Dorsolateral prefrontal cortex (tissue), 120 donors: ENCODE measurements at regions of chr1 and their contacts with region 1.

Region 1: DNA sequence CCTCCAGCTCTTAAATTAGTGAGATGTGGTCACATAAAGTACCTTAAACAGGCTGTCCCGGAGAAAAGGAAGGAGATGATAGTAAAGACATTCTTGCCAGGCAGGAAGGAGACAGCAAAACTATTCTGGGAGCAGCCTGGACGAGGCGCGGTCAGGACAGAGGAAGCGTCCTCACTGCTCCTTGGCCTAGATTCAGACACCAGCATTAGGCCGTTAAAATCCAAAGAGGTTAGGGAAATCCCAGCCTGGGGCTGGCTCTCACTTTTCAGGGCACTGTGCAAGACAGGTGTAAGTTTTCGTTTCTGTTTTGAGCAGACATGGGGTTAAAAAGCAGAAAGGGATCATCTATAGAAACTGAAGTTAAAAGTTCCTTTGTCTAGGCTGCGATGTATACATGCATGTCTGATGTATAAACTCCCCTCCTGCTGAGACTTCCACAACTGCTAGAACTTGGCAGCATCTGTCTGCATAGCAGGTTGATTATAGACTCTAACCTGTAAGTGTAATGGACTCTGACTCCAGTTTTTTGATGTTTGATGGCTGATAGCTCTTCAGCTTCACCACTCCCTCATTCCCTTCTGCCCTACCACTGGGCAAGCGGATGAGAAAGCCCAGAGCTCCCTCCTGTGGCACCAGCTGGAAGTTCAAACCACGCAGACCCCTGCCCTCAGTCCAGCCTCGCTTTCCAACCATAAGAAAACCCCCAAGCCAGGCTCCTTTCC is 21.5 kb downstream of the STPG1 start:
- DNase-seq: peak in 8 of 10 donors; percentile 46 to 75 (median 60)
- H3K4me3 ChIP-seq: peak overlapping the region in 35 of 59 donors; percentile 0 to 49 (median 26)
- H3K27ac ChIP-seq: peak overlapping the region; percentile 28 to 93 (median 80)
- H3K27me3 ChIP-seq: no peaks in the 10 kb centered on the region
- CTCF ChIP-seq: peak; percentile 30 to 90 (median 78)

Region 2: DNA sequence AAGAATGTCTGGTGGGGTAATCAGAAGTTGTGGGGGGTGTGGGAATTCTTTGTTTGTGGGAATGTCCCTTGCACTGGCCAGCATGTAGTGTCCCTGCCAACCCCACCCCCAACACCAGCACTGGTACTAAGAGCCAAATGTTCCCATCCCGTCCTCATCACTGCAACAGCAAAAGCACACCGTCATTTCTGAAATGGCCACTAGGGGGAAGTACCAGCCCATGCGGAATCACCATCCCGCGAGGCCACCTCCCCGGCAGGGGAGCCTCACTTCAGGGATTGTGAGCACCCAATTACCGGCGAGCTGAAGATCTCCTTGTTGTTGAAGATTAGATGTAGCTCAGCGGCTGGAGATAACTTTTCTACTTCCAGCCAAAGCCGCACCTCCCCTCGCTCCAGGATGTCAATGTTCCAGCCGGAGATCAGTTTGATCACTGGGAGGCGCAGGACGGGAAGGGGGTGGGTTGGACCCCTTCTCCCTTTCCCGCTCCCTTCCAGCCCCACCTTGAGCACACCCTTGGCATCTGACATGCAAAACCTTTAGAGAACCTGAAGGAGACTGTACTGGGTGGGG is 321.1 kb before region 1 on chr1:
- intact Hi-C with region 1: loop called in 1 of 2 experiments (anchors 5 kb)
- DNase-seq: peak; percentile 41 to 82 (median 74)
- H3K4me3 ChIP-seq: no peak overlapping the region
- H3K27ac ChIP-seq: no peak overlapping the region
- H3K27me3 ChIP-seq: peaks cover 0 to 3% (median 0%) of the 10 kb centered on the region in 45 donors
- CTCF ChIP-seq: peak; percentile 69 to 91 (median 84)

Region 3: GRCh38 chr1:24289937-24290595 is 102.0 kb before region 1 on chr1:
- intact Hi-C with region 1: loop called in 1 of 2 experiments (anchors 2 kb)
- DNase-seq: peak; percentile 35 to 92 (median 82)
- H3K4me3 ChIP-seq: no peak overlapping the region
- H3K27ac ChIP-seq: peak overlapping the region in 34 of 59 donors; percentile 2 to 91 (median 71)
- H3K27me3 ChIP-seq: peaks cover 0 to 5% (median 0%) of the 10 kb centered on the region in 45 donors
- CTCF ChIP-seq: peak in 1 of 56 donors; percentile 15

Region 4: GRCh38 chr1:24374891-24375786 is 16.9 kb before region 1 on chr1:
- intact Hi-C with region 1: no loop called
- DNase-seq: peak in 1 of 10 donors; percentile 85
- H3K4me3 ChIP-seq: no peak overlapping the region
- H3K27ac ChIP-seq: peak overlapping the region in 1 of 59 donors; percentile 83
- H3K27me3 ChIP-seq: no peaks in the 10 kb centered on the region
- CTCF ChIP-seq: no peak